ENCODE measurements at regions of chr3 and their contacts with region 1.

Region 1: GRCh38 chr3:143972505-143973255 is 1.1 kb downstream of the DIPK2A start:
- DNase-seq: no peak
- H3K4me3 ChIP-seq: peak overlapping the region; percentile 90
- H3K27ac ChIP-seq: peak overlapping the region; percentile 94
- H3K4me1 ChIP-seq: peaks cover 30% of the 10 kb centered on the region
- H3K27me3 ChIP-seq: no peaks in the 10 kb centered on the region
- CTCF ChIP-seq: peak; percentile 60

Region 2: GRCh38 chr3:144259267-144259666 is 286.6 kb after region 1 on chr3:
- CTCF ChIA-PET with region 1: no interaction called
- POLR2A ChIA-PET with region 1: no interaction called
- intact Hi-C with region 1: loop called (anchors 5 kb)
- DNase-seq: no peak
- H3K4me3 ChIP-seq: no peak overlapping the region
- H3K27ac ChIP-seq: no peak overlapping the region
- H3K4me1 ChIP-seq: peaks cover 17% of the 10 kb centered on the region
- H3K27me3 ChIP-seq: no peaks in the 10 kb centered on the region
- CTCF ChIP-seq: no peak

Region 3: DNA sequence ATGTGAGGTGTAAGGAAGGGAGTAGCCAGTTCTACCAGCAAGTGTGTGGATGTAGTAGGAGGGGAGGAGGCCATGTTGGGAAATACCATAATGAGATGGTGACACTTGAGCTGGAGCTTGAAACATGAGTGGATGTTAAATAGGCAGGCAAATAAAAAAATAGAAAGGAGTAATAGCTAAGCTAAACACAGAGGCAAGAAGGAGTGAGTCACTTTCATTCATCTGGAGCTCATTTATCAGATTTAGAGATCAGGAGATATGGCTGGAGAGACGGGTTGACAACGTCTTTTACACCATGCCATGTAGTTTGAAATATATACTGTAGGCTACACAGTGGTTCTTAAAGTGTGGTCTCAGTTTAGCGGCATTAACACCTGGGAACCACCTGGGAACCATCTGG is 389.4 kb after region 1 on chr3:
- CTCF ChIA-PET with region 1: no interaction called
- POLR2A ChIA-PET with region 1: no interaction called
- intact Hi-C with region 1: loop called (anchors 10 kb)
- DNase-seq: peak; percentile 67
- H3K4me3 ChIP-seq: no peak overlapping the region
- H3K27ac ChIP-seq: no peak overlapping the region
- H3K4me1 ChIP-seq: no peaks in the 10 kb centered on the region
- H3K27me3 ChIP-seq: no peaks in the 10 kb centered on the region
- CTCF ChIP-seq: no peak

Region 4: DNA sequence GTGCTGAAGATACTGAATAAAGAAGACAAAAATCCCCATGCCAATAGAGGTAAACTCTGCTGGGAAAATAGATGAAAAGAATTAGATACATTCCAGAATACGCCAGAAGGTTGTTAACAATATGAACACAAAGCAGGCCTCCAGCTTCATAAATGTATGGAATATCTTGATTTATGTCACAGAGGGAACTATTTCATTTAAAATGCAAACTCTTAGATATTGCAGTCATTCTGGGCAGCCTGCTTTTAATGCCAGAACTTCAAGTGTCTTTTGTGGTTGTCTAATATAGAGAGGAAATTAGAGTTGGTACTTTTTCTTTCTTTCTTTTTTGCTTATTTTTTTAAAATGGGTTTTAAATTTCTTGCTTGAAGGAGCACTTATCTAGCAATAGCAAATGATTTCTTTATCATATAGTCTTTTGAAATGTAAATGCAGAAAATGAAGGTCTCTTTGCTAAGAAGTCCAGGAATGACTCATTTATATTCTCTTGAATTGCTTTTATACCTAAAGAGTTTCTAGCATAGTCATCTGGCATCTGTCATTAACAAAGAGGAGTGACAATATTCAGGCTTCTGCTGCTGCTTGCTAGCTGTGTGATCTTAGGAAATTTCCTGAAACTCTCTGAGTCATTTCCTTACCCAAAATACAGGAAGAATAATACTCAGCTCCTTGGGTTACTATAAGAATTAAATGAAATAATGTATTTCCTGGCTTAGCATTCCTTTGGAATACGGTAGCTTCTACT is 526.5 kb after region 1 on chr3:
- CTCF ChIA-PET with region 1: no interaction called
- POLR2A ChIA-PET with region 1: no interaction called
- intact Hi-C with region 1: loop called (anchors 2 kb)
- DNase-seq: peak; percentile 94
- H3K4me3 ChIP-seq: no peak overlapping the region
- H3K27ac ChIP-seq: peak overlapping the region; percentile 39
- H3K4me1 ChIP-seq: peaks cover 46% of the 10 kb centered on the region
- H3K27me3 ChIP-seq: no peaks in the 10 kb centered on the region
- CTCF ChIP-seq: no peak

Region 5: GRCh38 chr3:144590854-144591253 is 618.2 kb after region 1 on chr3:
- CTCF ChIA-PET with region 1: no interaction called
- POLR2A ChIA-PET with region 1: no interaction called
- intact Hi-C with region 1: loop called (anchors 10 kb)
- DNase-seq: peak; percentile 76
- H3K4me3 ChIP-seq: no peak overlapping the region
- H3K27ac ChIP-seq: peak overlapping the region; percentile 3
- H3K4me1 ChIP-seq: peaks cover 3% of the 10 kb centered on the region
- H3K27me3 ChIP-seq: no peaks in the 10 kb centered on the region
- CTCF ChIP-seq: no peak

Region 6: GRCh38 chr3:144770915-144771351 is 798.3 kb after region 1 on chr3:
- CTCF ChIA-PET with region 1: no interaction called
- POLR2A ChIA-PET with region 1: no interaction called
- intact Hi-C with region 1: loop called (anchors 5 kb)
- DNase-seq: peak; percentile 61
- H3K4me3 ChIP-seq: no peak overlapping the region
- H3K27ac ChIP-seq: no peak overlapping the region
- H3K4me1 ChIP-seq: no peaks in the 10 kb centered on the region
- H3K27me3 ChIP-seq: no peaks in the 10 kb centered on the region
- CTCF ChIP-seq: peak; percentile 46

Region 7: DNA sequence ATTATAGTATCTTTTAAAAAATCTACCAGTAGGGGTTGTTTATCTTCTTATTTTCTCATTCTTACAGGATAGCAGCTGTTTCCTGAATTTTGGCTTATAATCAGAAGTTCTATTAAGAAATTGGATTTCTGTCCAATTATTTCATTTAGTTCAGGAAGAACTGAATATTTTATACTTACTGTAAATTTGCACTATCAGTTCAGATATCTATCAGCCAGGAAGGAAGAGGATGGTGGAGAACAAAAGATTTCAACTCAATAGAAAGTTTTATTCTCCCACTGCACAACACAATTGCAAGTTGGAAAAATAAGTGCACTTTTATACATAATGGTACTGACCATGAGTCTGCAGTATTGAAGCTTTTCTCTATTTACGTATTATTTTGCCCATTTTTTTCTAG is 1787.4 kb after region 1 on chr3:
- CTCF ChIA-PET with region 1: no interaction called
- POLR2A ChIA-PET with region 1: no interaction called
- intact Hi-C with region 1: loop called (anchors 5 kb)
- DNase-seq: peak; percentile 69
- H3K4me3 ChIP-seq: no peak overlapping the region
- H3K27ac ChIP-seq: peak overlapping the region; percentile 56
- H3K4me1 ChIP-seq: peaks cover 22% of the 10 kb centered on the region
- H3K27me3 ChIP-seq: no peaks in the 10 kb centered on the region
- CTCF ChIP-seq: no peak

Measured in A673 (cell line).